Activated T-helper 2 cell treated with anti-CD3 and anti-CD28 coated beads, Interferon-gamma antibody, Interleukin-2, Interleukin-4, amounts not matched to agents 10 μg/mL and 5 μg/mL and 100 μg/mL, durations not matched to agents 14 hours and 24 hours and 36 hours (primary cell): ENCODE measurements at regions of chr10 and their contacts with region 1.

Region 1: GRCh38 chr10:103416436-103417147 is 20.2 kb downstream of the PDCD11 start:
- DNase-seq: peak; percentile 47
- H3K4me3 Mint-ChIP-seq: no peak overlapping the region
- H3K27ac Mint-ChIP-seq: no peak overlapping the region
- H3K4me1 Mint-ChIP-seq: no peaks in the 10 kb centered on the region
- H3K27me3 Mint-ChIP-seq: no peaks in the 10 kb centered on the region

Region 2: GRCh38 chr10:103197177-103197576 is 219.4 kb before region 1 on chr10:
- intact Hi-C with region 1: no loop called
- DNase-seq: no peak
- H3K4me3 Mint-ChIP-seq: no peak overlapping the region
- H3K27ac Mint-ChIP-seq: peak overlapping the region; percentile 66
- H3K4me1 Mint-ChIP-seq: peaks cover 15% of the 10 kb centered on the region
- H3K27me3 Mint-ChIP-seq: no peaks in the 10 kb centered on the region

Region 3: DNA sequence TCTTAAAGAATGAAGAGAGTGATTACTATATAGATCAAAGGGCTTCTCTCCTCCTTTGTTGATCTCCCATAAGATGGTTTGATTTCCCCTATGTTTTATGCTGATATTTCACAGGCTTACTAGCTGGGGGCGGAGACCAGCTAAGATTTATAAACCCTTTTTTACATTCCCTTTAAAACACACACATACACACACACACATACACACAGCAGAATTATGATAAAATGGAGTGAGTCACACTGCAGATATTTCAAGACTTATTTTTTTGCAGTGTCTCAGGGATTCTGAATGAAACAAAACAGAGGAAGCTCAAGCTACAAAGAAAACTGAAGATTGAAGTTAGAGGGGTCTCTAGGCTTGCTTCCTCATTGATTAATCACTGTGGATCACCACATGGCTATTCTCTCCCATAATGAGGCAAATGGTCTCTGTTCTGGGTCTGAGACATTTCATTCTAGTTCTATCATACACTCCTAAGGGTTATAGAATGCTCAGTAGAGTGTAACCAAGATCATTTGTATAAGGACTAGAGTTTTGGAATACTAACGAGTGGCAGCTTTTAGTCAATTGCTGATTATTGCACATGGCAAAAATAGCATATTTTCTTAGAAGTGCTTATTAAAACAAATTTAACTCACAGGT is 121.1 kb before region 1 on chr10:
- intact Hi-C with region 1: no loop called
- DNase-seq: no peak
- H3K4me3 Mint-ChIP-seq: no peak overlapping the region
- H3K27ac Mint-ChIP-seq: no peak overlapping the region
- H3K4me1 Mint-ChIP-seq: no peaks in the 10 kb centered on the region
- H3K27me3 Mint-ChIP-seq: peaks cover 8% of the 10 kb centered on the region

Region 4: GRCh38 chr10:103394180-103394579 is 22.4 kb before region 1 on chr10:
- intact Hi-C with region 1: no loop called
- DNase-seq: no peak
- H3K4me3 Mint-ChIP-seq: peak overlapping the region; percentile 49
- H3K27ac Mint-ChIP-seq: no peak overlapping the region
- H3K4me1 Mint-ChIP-seq: peaks cover 43% of the 10 kb centered on the region
- H3K27me3 Mint-ChIP-seq: no peaks in the 10 kb centered on the region

Region 5: DNA sequence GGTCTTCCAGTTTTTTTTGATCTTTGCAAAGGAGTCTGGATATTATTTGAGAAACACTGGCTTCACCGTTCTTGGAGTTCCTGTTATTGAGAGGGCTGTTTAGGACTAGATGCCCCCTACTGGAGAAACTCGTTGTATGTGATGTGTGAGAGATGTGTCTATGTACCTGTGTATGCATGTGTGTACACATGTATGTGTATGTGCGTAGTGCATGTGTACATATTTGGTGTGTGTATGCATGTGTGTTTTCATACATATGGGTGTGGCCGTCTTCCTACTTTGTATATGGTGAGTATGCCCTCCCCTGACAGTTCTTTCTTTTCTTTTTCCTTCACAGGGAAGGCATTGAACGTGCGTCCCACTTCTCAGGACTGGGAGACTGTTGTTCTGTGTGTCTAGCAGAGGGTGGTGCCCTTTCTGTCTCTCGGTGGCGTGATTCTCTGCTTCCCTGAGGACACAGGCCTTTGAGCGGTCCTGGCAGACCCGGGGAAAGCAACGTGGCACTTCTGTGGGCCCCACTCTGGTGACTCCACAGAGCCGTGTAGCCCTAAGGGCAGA is 65.5 kb after region 1 on chr10:
- intact Hi-C with region 1: loop called (anchors 1 kb)
- DNase-seq: no peak
- H3K4me3 Mint-ChIP-seq: no peak overlapping the region
- H3K27ac Mint-ChIP-seq: no peak overlapping the region
- H3K4me1 Mint-ChIP-seq: peaks cover 14% of the 10 kb centered on the region
- H3K27me3 Mint-ChIP-seq: peaks cover 2% of the 10 kb centered on the region